Sciatic nerve (tissue), 2 donors: ENCODE measurements at regions of chr6 and their contacts with region 1.

Region 1: DNA sequence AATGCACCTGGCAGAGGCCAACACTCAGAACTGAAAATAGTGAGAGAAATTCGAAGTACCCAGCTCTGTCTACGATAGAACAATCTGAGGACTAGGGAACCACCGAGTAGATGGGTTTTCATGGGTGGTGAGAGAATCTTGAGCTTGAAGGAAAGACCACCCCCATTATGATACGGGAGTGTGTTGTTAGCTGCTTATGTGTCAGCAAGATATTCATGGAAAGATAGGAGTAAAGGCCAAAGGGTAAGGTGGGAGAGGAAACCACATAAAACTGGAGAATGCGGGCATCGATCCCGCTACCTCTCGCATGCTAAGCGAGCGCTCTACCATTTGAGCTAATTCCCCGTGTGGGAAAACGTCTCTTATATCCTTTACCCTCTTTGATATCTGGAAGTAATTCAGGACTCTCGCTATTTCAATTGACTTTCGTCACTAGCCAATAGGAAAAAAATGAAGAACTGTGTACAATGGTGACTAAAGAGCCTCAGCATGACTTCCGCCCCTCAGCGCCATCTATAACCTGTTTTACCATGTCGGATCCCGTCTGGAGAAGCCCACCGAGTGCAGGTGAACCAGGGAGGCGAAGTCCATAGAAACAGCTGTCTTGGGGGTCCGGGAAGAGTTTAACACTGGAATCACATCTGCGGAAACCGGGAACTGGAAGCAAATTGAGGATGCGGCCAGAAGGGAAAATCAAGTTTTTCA is 25.0 kb upstream of the ABT1 start:
- DNase-seq: no peak
- ATAC-seq: peak; percentile 72

Region 2: DNA sequence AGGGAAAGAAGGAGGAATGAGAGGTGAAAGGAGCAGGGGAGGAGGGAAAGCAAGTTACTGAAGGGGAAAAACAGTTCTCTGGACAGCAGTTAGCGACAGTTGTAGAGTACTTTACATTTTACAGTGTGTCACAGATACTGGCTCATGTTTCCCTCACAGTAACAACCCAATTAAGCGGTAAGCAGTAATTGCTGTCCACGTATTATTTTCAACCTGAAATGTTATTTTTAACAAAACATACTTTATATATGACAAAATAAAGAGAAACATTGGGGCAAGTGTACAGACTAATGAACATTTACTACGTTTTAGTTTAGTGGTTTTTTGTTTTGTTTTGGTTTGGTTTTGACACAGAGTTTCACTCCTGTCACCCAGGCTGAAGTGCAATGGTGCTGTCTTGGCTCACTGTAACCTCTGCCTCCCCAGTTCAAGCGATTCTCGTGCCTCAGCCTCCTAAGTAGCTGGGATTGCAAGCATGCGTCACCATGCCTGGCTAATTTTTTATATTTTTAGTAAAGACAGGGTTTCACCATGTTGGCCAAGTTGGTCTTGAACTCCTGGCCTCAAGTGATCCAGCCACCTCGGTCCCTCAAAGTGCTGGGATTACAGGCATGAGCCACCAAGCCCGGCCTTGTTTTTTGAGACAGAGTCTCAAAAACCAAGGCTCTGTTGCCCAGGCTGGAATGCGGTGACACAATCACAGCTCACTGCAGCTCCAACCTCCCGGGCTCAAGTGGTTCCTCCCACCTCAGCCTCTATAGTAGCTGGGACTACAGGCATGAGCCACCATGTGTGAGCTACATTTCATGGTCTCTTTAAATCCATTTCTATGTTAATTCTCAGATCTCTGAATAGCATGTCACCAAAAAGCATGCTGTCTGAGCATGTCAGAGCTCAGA is 229.4 kb before region 1 on chr6:
- intact Hi-C with region 1: loop called (anchors 10 kb)
- DNase-seq: no peak
- ATAC-seq: peak; percentile 22